ENCODE measurements at regions of chrX and their contacts with region 1.

Region 1: DNA sequence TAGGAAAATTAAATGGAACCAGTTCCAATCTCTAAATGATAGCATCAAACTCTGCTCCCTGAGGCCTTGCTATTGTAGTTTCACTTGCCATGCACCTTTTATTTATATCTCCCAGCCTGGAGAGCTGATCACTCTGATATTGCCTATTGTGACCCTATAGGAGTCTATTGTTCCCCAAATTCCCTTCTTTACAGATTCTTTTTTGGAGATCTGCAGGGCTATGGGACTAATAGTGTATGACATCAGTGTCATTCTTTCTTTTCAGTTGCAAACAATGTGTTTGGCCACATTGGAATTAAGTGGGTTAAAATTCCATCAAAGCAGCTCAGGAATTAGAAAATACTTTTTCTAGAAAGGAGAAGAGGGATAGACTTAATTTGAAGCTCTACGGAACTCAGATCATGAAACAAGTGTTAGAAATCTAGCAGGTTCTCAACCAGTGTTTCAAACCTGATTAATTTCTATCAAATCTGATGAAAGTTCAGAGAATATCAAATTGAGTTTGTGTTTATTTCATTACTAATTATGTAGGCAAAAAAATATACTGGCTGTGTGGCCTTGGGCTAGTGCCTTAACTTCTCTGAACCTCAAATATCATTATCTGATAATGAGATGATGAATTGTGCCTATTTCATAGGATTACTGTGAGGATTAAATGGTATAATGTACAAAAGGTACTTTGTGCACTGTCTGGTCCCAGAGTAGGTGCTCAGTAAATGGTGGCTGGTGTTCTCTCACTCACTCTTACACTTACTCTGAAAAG is 71.4 kb downstream of the COL4A6 start:
- DNase-seq: no peak
- H3K4me3 Mint-ChIP-seq: no peak overlapping the region
- H3K27ac Mint-ChIP-seq: no peak overlapping the region
- H3K4me1 Mint-ChIP-seq: peaks cover 11% of the 10 kb centered on the region
- H3K27me3 Mint-ChIP-seq: peaks cover 71% of the 10 kb centered on the region
- CTCF ChIP-seq: no peak

Region 2: GRCh38 chrX:108380222-108380621 is 13.4 kb after region 1 on chrX:
- CTCF ChIA-PET with region 1: interaction called, 13 read pairs
- POLR2A ChIA-PET with region 1: no interaction called
- intact Hi-C with region 1: no loop called
- DNase-seq: no peak
- H3K4me3 Mint-ChIP-seq: no peak overlapping the region
- H3K27ac Mint-ChIP-seq: no peak overlapping the region
- H3K4me1 Mint-ChIP-seq: no peaks in the 10 kb centered on the region
- H3K27me3 Mint-ChIP-seq: peaks cover 37% of the 10 kb centered on the region
- CTCF ChIP-seq: no peak

Measured in MCF 10A (cell line).